Astrocyte of the cerebellum (primary cell): ENCODE measurements at regions of chr15 and their contacts with region 1.

Region 1: GRCh38 chr15:88509964-88510363 is 36.5 kb downstream of the DET1 start:
- DNase-seq: no peak
- H3K4me3 ChIP-seq: no peak overlapping the region
- CTCF ChIP-seq: no peak

Region 2: DNA sequence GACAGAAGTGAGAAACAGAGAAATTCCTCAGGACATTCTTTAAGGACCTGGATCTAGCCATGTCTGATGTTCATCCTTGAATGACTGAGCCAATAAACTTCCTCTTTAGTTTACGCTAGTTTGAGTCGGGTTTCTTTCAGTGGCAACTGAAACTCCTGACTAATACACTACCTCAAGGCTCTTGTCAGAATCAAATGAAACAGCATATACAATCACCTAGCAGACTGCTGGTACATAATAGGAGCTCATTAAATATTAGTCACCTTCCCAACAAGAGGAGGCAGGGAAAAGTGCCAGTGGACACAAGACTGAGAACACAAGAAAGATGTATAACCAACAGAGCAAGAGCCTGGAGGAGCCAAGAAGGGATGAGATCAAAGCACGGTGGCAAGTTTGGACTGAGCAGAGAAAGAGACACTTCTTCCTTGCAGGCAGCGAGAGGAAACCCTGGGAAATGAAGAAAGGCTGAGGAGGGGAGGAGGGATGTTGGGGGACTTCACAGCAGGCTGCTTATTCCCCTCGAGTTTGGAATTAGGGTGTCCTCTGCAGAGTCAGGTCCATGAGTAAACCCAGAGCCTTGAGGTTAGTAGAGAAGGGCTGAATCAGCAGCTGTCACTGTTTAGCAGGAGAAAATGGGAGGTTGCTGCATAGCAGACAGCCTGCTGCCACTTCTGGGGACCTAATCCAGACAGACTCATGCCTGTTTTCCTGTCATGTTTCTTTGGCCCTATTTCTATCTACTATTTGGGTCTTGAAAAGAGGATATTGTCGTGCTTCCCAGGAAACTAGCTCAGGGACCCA is 116.0 kb before region 1 on chr15:
- in situ Hi-C with region 1: no loop called
- DNase-seq: no peak
- H3K4me3 ChIP-seq: no peak overlapping the region
- CTCF ChIP-seq: no peak

Region 3: DNA sequence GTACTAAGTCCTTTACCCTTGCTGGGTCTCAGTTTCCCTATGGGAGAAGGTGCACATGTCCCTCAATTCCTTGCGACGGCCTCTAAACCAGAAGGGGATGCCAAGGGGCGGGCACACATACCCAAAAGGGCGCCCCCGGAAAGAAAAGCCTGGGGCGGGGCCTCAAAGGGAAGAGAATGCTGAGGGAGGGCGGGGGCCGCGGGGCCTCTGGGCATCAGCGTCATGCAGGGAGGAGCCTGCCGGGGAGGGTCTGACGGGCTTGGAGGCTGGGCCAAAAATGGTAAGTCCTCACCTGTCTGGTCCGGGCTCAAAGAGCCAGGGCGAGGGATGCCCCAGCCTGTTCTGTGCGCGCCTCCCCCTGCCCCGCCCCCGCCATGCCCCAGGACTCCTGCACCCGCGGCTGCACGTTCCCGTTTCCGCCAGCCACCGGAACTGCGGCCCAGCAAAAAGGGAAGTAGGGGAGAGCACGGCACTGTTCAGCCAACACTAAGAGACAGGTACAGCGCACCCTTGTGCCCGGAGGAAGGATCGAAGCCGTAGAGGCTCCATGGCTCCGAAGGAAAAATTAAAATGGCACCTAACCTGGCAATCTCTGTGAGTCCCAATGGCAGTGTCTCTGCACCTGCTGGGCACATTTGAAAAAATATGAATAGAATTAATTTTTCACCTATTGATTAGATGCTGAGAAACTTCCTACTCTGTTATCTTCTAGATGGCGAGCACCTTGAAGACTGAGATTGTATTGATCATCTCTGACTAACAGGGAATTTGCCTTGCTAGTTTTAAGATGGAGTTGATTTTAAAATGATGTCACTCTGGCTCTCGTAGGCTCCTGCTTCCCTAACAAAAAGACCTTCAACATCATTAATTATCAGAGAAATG is 36.5 kb after region 1 on chr15 and contains the start of gene DET1:
- in situ Hi-C with region 1: no loop called
- DNase-seq: peak; percentile 86
- H3K4me3 ChIP-seq: peak within 1 kb of the TSS; percentile 60
- CTCF ChIP-seq: peak; percentile 88

Region 4: DNA sequence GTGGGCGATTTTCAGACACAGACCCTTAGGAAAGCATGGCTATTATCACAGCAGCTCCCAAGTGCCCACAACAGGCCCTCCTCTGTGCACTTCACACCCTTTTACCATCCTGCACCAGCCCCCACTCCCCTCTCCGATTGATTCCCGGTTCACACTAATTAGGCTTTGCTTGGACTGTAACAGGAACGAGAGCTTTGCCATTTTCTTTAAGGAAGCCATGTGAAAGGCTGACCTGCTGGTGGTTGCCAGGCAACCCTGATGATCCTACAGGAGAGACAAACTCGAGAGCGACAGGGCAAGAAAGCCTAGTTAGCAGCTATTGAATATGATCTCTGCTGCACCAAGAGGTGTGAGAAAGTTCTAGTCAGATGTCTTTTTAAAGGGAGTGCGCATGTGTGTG is 64.7 kb after region 1 on chr15:
- in situ Hi-C with region 1: loop called (anchors 5 kb)
- DNase-seq: no peak
- H3K4me3 ChIP-seq: no peak overlapping the region
- CTCF ChIP-seq: no peak

Region 5: GRCh38 chr15:88586401-88587162 is 76.6 kb after region 1 on chr15:
- in situ Hi-C with region 1: no loop called
- DNase-seq: no peak
- H3K4me3 ChIP-seq: no peak overlapping the region
- CTCF ChIP-seq: no peak